ENCODE measurements at regions of chr11 and their contacts with region 1.

Region 1: DNA sequence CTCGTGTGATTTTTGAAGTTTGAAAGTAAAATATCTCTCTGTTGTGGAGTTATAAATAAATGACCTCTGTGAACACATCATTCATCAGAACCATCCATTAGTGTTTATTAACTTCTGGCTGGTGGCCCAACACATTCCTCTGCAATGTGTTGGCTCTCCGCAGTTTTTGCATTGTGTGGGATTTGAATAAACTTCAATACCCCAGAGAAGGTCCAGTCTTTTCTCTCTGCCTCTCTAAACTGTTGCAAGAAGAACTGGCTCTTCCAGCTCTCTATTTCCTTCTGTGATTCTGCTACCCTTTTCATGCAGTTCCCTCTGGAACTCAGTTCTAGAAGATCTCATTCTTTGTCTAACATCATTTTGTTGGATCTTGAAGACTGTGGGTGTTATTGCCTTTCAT is 125.0 kb upstream of the ARHGAP42 start:
- DNase-seq: peak; percentile 53 to 86
- H3K4me3 ChIP-seq: no peak overlapping the region
- H3K27ac ChIP-seq: peak overlapping the region; percentile 7; the same call in 1 of the 2 replicates
- H3K4me1 ChIP-seq: peaks cover 24% of the 10 kb centered on the region
- H3K27me3 ChIP-seq: no peaks in the 10 kb centered on the region
- CTCF ChIP-seq: no peak

Region 2: GRCh38 chr11:100340416-100341323 is 221.5 kb before region 1 on chr11:
- CTCF ChIA-PET with region 1: no interaction called
- POLR2A ChIA-PET with region 1: no interaction called
- intact Hi-C with region 1: no loop called
- DNase-seq: peak in 1 of 2 experiments; percentile 32
- H3K4me3 ChIP-seq: no peak overlapping the region
- H3K27ac ChIP-seq: no peak overlapping the region
- H3K4me1 ChIP-seq: no peaks in the 10 kb centered on the region
- H3K27me3 ChIP-seq: no peaks in the 10 kb centered on the region
- CTCF ChIP-seq: no peak

Region 3: DNA sequence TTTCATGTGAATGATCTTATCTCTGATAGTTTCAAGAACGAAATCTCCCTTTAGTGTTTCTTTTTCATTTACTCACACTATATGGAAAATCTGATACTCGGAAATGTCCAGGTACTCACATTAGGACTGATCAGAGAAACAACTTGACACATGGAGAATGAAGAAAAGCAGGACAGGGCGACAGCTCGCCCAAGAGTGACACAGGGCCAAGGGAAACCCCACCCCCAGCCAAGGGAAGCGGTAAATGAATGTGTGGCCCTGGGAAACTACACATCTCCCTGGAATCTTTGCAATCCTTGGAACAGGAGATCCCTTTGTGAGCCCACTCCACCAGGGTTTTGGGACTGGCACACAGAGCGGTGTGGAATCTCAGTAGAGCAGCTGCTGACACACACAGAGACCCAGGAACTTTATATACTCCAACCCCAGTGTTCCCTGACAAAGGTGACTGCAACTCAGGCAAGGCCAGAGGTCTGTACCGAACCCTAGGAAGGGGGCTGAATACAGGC is 178.7 kb before region 1 on chr11:
- CTCF ChIA-PET with region 1: no interaction called
- POLR2A ChIA-PET with region 1: no interaction called
- intact Hi-C with region 1: loop called (anchors 10 kb)
- DNase-seq: no peak
- H3K4me3 ChIP-seq: no peak overlapping the region
- H3K27ac ChIP-seq: no peak overlapping the region
- H3K4me1 ChIP-seq: no peaks in the 10 kb centered on the region
- H3K27me3 ChIP-seq: no peaks in the 10 kb centered on the region
- CTCF ChIP-seq: no peak